ENCODE measurements at regions of chr17 and their contacts with region 1.

Region 1: GRCh38 chr17:43645765-43646481 is 15.8 kb downstream of the MEOX1 start:
- DNase-seq: peak; percentile 34
- H3K4me3 Mint-ChIP-seq: no peak overlapping the region
- H3K27ac Mint-ChIP-seq: no peak overlapping the region
- H3K4me1 Mint-ChIP-seq: peaks cover 22% of the 10 kb centered on the region
- H3K27me3 Mint-ChIP-seq: peaks cover 5% of the 10 kb centered on the region

Region 2: DNA sequence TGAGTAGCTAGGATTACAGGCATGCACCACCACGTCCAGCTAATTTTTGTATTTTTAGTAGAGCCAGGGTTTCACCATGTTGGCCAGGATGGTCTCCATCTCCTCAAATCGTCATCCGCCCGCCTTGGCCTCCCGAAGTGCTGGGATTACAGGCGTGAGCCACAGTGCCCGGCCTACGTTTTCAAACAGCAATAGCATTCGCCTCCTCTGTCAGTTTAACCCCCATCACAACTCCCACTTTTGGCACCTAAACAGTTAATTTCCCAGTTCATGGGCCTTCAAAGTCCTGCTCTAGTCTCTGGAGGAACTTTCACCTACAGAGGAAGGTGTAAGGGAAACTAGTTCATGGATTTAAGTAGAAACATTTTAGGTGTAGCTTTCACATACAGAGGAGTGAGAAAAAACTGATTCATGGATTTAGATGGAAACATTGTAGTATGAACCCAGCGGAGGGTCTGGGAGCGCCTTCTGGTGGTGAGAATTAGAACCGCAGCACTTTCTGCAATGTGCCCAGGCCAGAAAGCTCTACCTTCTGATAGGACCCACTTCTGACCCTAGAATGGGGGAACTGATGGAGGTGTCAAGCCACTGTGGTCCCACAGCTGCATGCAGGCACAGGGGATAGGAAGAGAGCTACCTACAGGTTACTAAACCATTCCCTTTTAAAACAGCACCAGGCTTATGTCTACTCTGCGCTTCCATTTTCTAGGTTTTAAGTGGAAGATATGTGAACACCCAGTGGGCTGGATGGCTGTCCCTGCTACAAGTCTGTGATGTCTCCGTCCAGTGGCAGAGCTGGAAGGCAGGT is 27.8 kb after region 1 on chr17:
- CTCF ChIA-PET with region 1: interaction called, 15 read pairs
- POLR2A ChIA-PET with region 1: no interaction called
- intact Hi-C with region 1: no loop called
- DNase-seq: peak; percentile 85
- H3K4me3 Mint-ChIP-seq: no peak overlapping the region
- H3K27ac Mint-ChIP-seq: no peak overlapping the region
- H3K4me1 Mint-ChIP-seq: peaks cover 12% of the 10 kb centered on the region
- H3K27me3 Mint-ChIP-seq: no peaks in the 10 kb centered on the region

Region 3: GRCh38 chr17:43878260-43879175 is 232.6 kb after region 1 on chr17:
- CTCF ChIA-PET with region 1: no interaction called
- POLR2A ChIA-PET with region 1: no interaction called
- intact Hi-C with region 1: no loop called
- DNase-seq: peak; percentile 76
- H3K4me3 Mint-ChIP-seq: no peak overlapping the region
- H3K27ac Mint-ChIP-seq: no peak overlapping the region
- H3K4me1 Mint-ChIP-seq: no peaks in the 10 kb centered on the region
- H3K27me3 Mint-ChIP-seq: no peaks in the 10 kb centered on the region

Measured in activated CD4-positive, alpha-beta memory T cell treated with anti-CD3 and anti-CD28 coated beads for 36 hours (primary cell).